Naive thymus-derived CD4-positive, alpha-beta T cell (primary cell): ENCODE measurements at regions of chr21 and their contacts with region 1.

Region 1: GRCh38 chr21:17819114-17819876 is at the start of gene C21orf91:
- DNase-seq: peak; percentile 78 to 92 (median 91)
- ATAC-seq: peak; percentile 94
- H3K4me3 ChIP-seq: peak within 1 kb of the TSS; percentile 71
- H3K4me3 Mint-ChIP-seq: peak within 1 kb of the TSS; percentile 94 to 100 (median 97)
- H3K27ac ChIP-seq: peak within 1 kb of the TSS; percentile 89
- H3K27ac Mint-ChIP-seq: peak within 1 kb of the TSS; percentile 96 to 100 (median 100)
- H3K4me1 ChIP-seq: peaks cover 26 to 34% of the 10 kb centered on the region in 2 donors
- H3K4me1 Mint-ChIP-seq: peaks cover 28 to 63% (median 50%) of the 10 kb centered on the region in 7 donors
- H3K27me3 ChIP-seq: no peaks in the 10 kb centered on the region
- H3K27me3 Mint-ChIP-seq: no peaks in the 10 kb centered on the region
- total RNA-seq, gene C21orf91: 26.0 to 59.8 (median 57.7) TPM

Region 2: GRCh38 chr21:17512253-17513213 is 306.8 kb before region 1 on chr21 and contains the start of gene CXADR:
- CTCF ChIA-PET with region 1: no interaction called
- POLR2A ChIA-PET with region 1: no interaction called
- intact Hi-C with region 1: loop called in 1 of 2 experiments (anchors 2 kb)
- DNase-seq: peak; percentile 73 to 86 (median 84)
- ATAC-seq: peak; percentile 89
- H3K4me3 ChIP-seq: peak within 1 kb of the TSS; percentile 66
- H3K4me3 Mint-ChIP-seq: peak within 1 kb of the TSS; percentile 81 to 92 (median 90)
- H3K27ac ChIP-seq: peak within 1 kb of the TSS; percentile 59
- H3K27ac Mint-ChIP-seq: peak within 1 kb of the TSS; percentile 30 to 92 (median 55)
- H3K4me1 ChIP-seq: peaks cover 11% of the 10 kb centered on the region in 2 donors
- H3K4me1 Mint-ChIP-seq: peaks cover 15 to 26% (median 22%) of the 10 kb centered on the region in 7 donors
- H3K27me3 ChIP-seq: no peaks in the 10 kb centered on the region
- H3K27me3 Mint-ChIP-seq: peaks cover 0 to 60% (median 3%) of the 10 kb centered on the region in 5 donors
- total RNA-seq, gene CXADR: 0.12 to 1.8 (median 0.51) TPM

Region 3: GRCh38 chr21:17679002-17679600 is 140.2 kb before region 1 on chr21:
- CTCF ChIA-PET with region 1: interaction called, 4 read pairs
- POLR2A ChIA-PET with region 1: interaction called, 3 read pairs
- intact Hi-C with region 1: loop called (anchors 1 to 2 kb)
- DNase-seq: peak in 7 of 9 donors; percentile 50 to 76 (median 60)
- ATAC-seq: peak; percentile 96
- H3K4me3 ChIP-seq: no peak overlapping the region
- H3K4me3 Mint-ChIP-seq: no peak overlapping the region
- H3K27ac ChIP-seq: no peak overlapping the region
- H3K27ac Mint-ChIP-seq: no peak overlapping the region
- H3K4me1 ChIP-seq: no peaks in the 10 kb centered on the region
- H3K4me1 Mint-ChIP-seq: no peaks in the 10 kb centered on the region
- H3K27me3 ChIP-seq: no peaks in the 10 kb centered on the region
- H3K27me3 Mint-ChIP-seq: peaks cover 0 to 4% (median 0%) of the 10 kb centered on the region in 5 donors

Region 4: GRCh38 chr21:17726047-17726830 is 93.1 kb before region 1 on chr21:
- CTCF ChIA-PET with region 1: no interaction called
- POLR2A ChIA-PET with region 1: no interaction called
- intact Hi-C with region 1: loop called in 1 of 2 experiments (anchors 2 kb)
- DNase-seq: no peak
- ATAC-seq: no peak
- H3K4me3 ChIP-seq: no peak overlapping the region
- H3K4me3 Mint-ChIP-seq: no peak overlapping the region
- H3K27ac ChIP-seq: no peak overlapping the region
- H3K27ac Mint-ChIP-seq: no peak overlapping the region
- H3K4me1 ChIP-seq: no peaks in the 10 kb centered on the region
- H3K4me1 Mint-ChIP-seq: peaks cover 0 to 6% (median 0%) of the 10 kb centered on the region in 7 donors
- H3K27me3 ChIP-seq: no peaks in the 10 kb centered on the region
- H3K27me3 Mint-ChIP-seq: peaks cover 0 to 2% (median 0%) of the 10 kb centered on the region in 5 donors

Region 5: DNA sequence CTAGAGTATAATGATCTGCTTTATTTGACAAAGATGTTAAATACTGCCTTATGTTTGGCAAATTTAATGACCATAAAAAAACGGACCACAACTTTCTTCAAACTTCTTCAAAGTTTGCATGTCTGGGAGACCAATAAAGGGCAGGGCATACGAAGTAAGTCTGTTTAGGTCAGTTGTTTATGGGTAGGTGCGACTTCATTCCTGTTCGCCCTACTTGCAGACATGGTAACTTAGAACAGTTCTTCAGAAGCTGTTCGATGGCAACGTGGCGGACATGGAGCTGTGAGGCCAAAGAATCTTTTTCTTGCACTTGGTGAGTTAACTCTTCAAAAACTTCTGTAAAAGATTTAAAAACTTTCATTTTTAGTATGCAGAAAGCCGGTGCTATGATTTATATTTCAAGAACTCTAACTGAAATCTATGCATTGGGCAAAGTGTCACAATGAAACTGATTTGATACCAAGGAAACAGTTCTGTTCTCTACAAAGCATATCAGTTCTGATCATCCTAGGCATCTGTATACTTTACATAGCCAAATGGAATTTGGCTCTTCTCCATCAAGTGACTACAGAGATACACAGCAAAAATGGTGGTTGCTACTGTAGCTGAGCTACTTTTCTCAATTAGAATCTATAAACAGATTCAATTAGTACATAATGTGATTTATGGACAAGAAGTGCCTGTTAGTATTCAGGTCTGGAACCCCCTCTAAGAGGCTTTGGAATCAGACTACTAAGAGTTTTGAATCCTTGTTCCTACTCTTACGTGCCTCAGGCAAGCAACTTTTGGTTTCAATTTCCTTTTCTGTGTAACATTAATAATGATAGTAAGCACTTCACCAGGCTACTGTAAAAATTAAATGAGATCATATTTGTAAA is 25.8 kb before region 1 on chr21:
- CTCF ChIA-PET with region 1: interaction called, 6 read pairs
- POLR2A ChIA-PET with region 1: interaction called, 35 read pairs
- intact Hi-C with region 1: loop called (anchors 1 kb)
- DNase-seq: peak in 2 of 9 donors; percentile 28 to 37
- ATAC-seq: peak; percentile 65
- H3K4me3 ChIP-seq: peak overlapping the region; percentile 36
- H3K4me3 Mint-ChIP-seq: peak overlapping the region; percentile 38 to 86 (median 80)
- H3K27ac ChIP-seq: peak overlapping the region; percentile 73
- H3K27ac Mint-ChIP-seq: peak overlapping the region; percentile 77 to 92 (median 87)
- H3K4me1 ChIP-seq: peaks cover 36 to 47% of the 10 kb centered on the region in 2 donors
- H3K4me1 Mint-ChIP-seq: peaks cover 23 to 92% (median 66%) of the 10 kb centered on the region in 7 donors
- H3K27me3 ChIP-seq: no peaks in the 10 kb centered on the region
- H3K27me3 Mint-ChIP-seq: no peaks in the 10 kb centered on the region

Region 6: DNA sequence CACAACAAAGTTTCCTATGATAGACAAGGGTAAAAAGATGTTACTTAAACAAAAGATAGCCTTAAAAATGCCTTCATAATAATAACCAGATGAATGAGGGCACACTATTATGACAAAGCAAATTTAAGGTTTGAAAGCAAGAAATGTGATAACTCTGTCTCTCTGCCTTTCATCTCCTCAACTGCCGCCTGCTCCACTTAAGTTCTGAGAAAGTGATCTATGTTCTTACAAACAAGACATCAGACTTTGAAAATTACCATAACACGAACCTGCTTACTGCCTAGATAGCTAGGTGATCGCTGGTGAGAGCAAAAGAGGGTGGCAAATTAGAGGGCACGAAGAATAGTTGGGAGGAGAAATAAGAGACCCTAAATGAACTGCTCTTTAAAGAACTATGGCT is 13.3 kb before region 1 on chr21:
- CTCF ChIA-PET with region 1: interaction called, 5 read pairs
- POLR2A ChIA-PET with region 1: interaction called, 56 read pairs
- intact Hi-C with region 1: loop called (anchors 1 to 2 kb)
- DNase-seq: peak in 1 of 9 donors; percentile 19
- ATAC-seq: peak; percentile 46
- H3K4me3 ChIP-seq: no peak overlapping the region
- H3K4me3 Mint-ChIP-seq: peak overlapping the region in 5 of 10 donors; percentile 12 to 64 (median 22)
- H3K27ac ChIP-seq: no peak overlapping the region
- H3K27ac Mint-ChIP-seq: peak overlapping the region in 8 of 9 donors; percentile 10 to 93 (median 74)
- H3K4me1 ChIP-seq: peaks cover 0 to 14% of the 10 kb centered on the region in 2 donors
- H3K4me1 Mint-ChIP-seq: peaks cover 25 to 59% (median 54%) of the 10 kb centered on the region in 7 donors
- H3K27me3 ChIP-seq: no peaks in the 10 kb centered on the region
- H3K27me3 Mint-ChIP-seq: no peaks in the 10 kb centered on the region